IMR-90 (cell line): ENCODE measurements at regions of chr12 and their contacts with region 1.

Region 1: GRCh38 chr12:6925540-6926279 is 2.0 kb upstream of the ATN1 start:
- DNase-seq: peak; percentile 90
- ATAC-seq: peak; percentile 28
- H3K4me3 ChIP-seq: peak overlapping the region; percentile 25
- H3K27ac ChIP-seq: peak overlapping the region; percentile 93
- H3K4me1 ChIP-seq: peaks cover 25% of the 10 kb centered on the region
- H3K27me3 ChIP-seq: no peaks in the 10 kb centered on the region
- CTCF ChIP-seq: no peak
- POLR2A ChIP-seq: no peak
- RAD21 ChIP-seq: no peak

Region 2: GRCh38 chr12:6937481-6938297 is 12.0 kb after region 1 on chr12:
- CTCF ChIA-PET with region 1: interaction called, 5 read pairs
- POLR2A ChIA-PET with region 1: interaction called, 11 read pairs
- dilution Hi-C with region 1: no loop called
- in situ Hi-C with region 1: no loop called
- intact Hi-C with region 1: loop called (anchors 1 kb)
- DNase-seq: peak; percentile 92
- ATAC-seq: peak; percentile 89
- H3K4me3 ChIP-seq: peak overlapping the region; percentile 46
- H3K27ac ChIP-seq: peak overlapping the region; percentile 69
- H3K4me1 ChIP-seq: peaks cover 9% of the 10 kb centered on the region
- H3K27me3 ChIP-seq: no peaks in the 10 kb centered on the region
- CTCF ChIP-seq: peak; percentile 96
- POLR2A ChIP-seq: peak; percentile 35; the same call in 1 of the 2 replicates
- RAD21 ChIP-seq: peak; percentile 62

Region 3: DNA sequence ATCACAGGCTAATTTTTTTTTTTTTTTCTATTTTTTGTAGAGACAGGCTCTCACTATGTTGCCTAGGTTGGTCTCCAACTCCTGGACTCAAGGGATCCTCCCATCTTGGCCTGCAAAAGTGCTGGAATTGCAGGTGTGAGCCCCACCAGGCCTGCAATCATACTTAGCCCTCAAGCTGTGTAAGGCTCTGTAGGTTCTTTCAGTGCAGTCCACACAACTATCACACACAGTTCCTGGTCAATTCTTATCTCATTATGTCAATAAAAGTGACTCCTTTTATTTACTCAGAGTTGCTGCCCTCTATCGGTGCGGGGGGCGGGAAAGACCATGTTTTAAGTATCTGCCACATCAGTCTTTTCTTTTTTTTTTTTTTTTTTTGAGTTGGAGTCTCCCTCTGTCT is 981.3 kb after region 1 on chr12:
- CTCF ChIA-PET with region 1: no interaction called
- POLR2A ChIA-PET with region 1: no interaction called
- dilution Hi-C with region 1: no loop called
- in situ Hi-C with region 1: no loop called
- intact Hi-C with region 1: no loop called
- DNase-seq: peak; percentile 61
- ATAC-seq: peak; percentile 73
- H3K4me3 ChIP-seq: no peak overlapping the region
- H3K27ac ChIP-seq: no peak overlapping the region
- H3K4me1 ChIP-seq: no peaks in the 10 kb centered on the region
- H3K27me3 ChIP-seq: no peaks in the 10 kb centered on the region
- CTCF ChIP-seq: peak; percentile 52
- POLR2A ChIP-seq: no peak
- RAD21 ChIP-seq: peak; percentile 25